H1 (cell line): ENCODE measurements at regions of chr7 and their contacts with region 1.

Region 1: GRCh38 chr7:101857358-101857811 is 40.0 kb downstream of the CUX1 start:
- DNase-seq: no peak
- H3K4me3 ChIP-seq: no peak overlapping the region
- H3K27ac ChIP-seq: no peak overlapping the region
- H3K4me1 ChIP-seq: peaks cover 13 to 31% (median 28%) of the 10 kb centered on the region in 4 experiments; a peak in 6 of 7 replicates
- H3K27me3 ChIP-seq: no peaks in the 10 kb centered on the region
- CTCF ChIP-seq: no peak
- EP300 ChIP-seq: no peak
- POLR2A ChIP-seq: no peak
- RAD21 ChIP-seq: no peak

Region 2: GRCh38 chr7:101614939-101615302 is 242.5 kb before region 1 on chr7:
- CTCF ChIA-PET with region 1: no interaction called
- POLR2A ChIA-PET with region 1: no interaction called
- DNase-seq: no peak
- H3K4me3 ChIP-seq: no peak overlapping the region
- H3K27ac ChIP-seq: no peak overlapping the region
- H3K4me1 ChIP-seq: peaks cover 4 to 21% (median 14%) of the 10 kb centered on the region in 4 experiments; a peak in 6 of 7 replicates
- H3K27me3 ChIP-seq: no peaks in the 10 kb centered on the region
- CTCF ChIP-seq: no peak
- EP300 ChIP-seq: no peak
- POLR2A ChIP-seq: no peak
- RAD21 ChIP-seq: no peak

Region 3: DNA sequence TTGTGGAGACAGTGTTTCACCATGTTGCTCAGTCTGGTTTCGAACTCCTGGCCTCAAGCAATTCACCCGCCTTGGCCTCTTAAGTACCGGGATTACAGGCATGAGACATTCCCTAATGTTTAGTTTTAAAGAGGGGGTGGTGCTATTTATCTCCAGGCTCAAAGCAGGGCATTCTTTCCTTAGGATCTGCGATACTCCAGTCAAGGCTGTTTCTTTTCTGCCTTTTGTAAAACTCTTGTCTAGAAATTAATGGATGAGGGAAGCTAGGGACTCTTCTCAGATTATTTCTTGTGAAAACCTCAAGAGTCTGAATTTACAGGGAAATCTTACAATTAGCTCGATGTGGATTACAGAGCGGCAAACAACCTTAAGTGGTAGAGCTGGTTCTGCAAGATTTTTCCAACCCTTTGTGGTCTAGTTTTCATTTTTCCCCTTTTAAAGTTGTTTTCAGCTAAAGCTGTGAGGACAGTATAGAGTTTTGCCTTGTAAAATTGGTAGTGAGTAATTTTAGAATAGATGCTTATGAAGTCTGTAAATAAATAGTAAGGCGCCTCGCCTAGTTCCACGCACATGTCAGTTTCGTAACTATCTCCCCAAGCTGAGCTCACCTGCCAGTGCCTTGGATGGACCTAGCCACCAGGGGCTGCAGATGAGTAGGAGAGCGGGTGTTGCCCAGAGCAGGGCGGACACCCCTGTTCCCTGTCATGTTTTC is 13.1 kb after region 1 on chr7:
- CTCF ChIA-PET with region 1: interaction called, 12 read pairs
- POLR2A ChIA-PET with region 1: interaction called, 6 read pairs
- DNase-seq: no peak
- H3K4me3 ChIP-seq: peak overlapping the region in 2 of 4 experiments; percentile 3 to 30; a peak in 1 of 8 replicates
- H3K27ac ChIP-seq: peak overlapping the region; percentile 66; the same call in 1 of the 2 replicates
- H3K4me1 ChIP-seq: peaks cover 10 to 37% (median 28%) of the 10 kb centered on the region in 4 experiments
- H3K27me3 ChIP-seq: no peaks in the 10 kb centered on the region
- CTCF ChIP-seq: peak; percentile 53 to 77 (median 67)
- EP300 ChIP-seq: no peak
- POLR2A ChIP-seq: no peak
- RAD21 ChIP-seq: peak; percentile 50 to 65

Region 4: GRCh38 chr7:102220960-102221800 is 363.8 kb after region 1 on chr7:
- CTCF ChIA-PET with region 1: no interaction called
- POLR2A ChIA-PET with region 1: no interaction called
- DNase-seq: no peak
- H3K4me3 ChIP-seq: no peak overlapping the region
- H3K27ac ChIP-seq: no peak overlapping the region
- H3K4me1 ChIP-seq: 0 out of 7 replicates have a peak, but pooled peaks cover 0 to 2% (median 0%) of the 10 kb centered on the region in 4 experiments
- H3K27me3 ChIP-seq: no peaks in the 10 kb centered on the region
- CTCF ChIP-seq: no peak
- EP300 ChIP-seq: no peak
- POLR2A ChIP-seq: no peak
- RAD21 ChIP-seq: no peak